IMR-90 (cell line): ENCODE measurements at regions of chr13 and their contacts with region 1.

Region 1: DNA sequence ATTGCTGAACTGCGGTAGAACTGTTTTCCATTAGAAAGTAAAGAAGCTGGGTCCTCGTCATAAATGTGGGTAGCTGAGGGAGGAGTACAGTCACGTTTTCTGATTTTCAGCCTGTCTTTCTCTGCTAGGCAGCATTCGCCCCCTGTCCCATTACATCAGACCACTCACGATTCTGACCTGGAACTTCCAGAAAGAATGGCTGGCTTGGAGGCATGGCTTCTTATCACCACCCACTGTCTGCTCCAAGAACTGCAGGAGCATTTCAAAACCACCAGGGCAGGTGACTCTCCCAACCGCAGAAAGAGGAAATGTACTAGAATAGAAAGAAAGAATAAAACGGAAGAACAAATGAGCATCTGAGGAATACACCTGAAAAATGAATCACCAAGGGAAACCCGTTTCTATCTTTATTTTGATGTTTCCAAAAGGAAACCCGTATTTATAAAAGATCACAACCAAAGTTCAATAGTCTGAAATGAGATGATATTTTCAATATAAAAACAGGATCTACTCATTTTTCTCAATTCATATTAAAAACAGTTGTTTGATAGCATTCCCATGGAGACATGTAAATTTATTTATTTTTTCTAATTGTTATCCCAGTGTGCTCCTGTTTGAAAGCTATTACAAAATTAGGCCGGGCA is 22.1 kb upstream of the POMP start:
- DNase-seq: peak; percentile 89
- ATAC-seq: peak; percentile 93
- H3K4me3 ChIP-seq: no peak overlapping the region
- H3K27ac ChIP-seq: no peak overlapping the region
- H3K4me1 ChIP-seq: peaks cover 2% of the 10 kb centered on the region; the same call in 1 of the 2 replicates
- H3K27me3 ChIP-seq: no peaks in the 10 kb centered on the region
- CTCF ChIP-seq: peak; percentile 93
- POLR2A ChIP-seq: peak; percentile 44; the same call in 1 of the 2 replicates
- RAD21 ChIP-seq: peak; percentile 98

Region 2: DNA sequence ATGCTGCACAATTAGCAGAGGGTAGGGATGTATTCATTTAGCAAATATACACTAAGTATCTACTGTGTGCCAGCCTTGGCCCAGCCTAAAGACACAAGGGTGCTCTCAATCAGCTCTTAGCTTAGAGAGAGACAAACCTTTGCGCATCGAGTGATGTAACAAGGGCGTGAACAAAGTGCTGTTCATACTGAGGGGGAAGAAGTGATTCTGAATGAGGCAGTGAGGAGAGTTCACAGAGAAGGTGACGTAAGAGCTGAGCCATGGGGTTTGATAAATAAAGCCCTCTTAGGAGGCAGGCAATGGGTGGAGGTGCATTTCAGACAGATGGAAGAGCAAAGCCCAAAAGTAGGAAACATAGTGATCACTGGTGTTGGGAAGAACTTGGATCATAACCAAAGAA is 210.4 kb before region 1 on chr13:
- CTCF ChIA-PET with region 1: no interaction called
- POLR2A ChIA-PET with region 1: no interaction called
- dilution Hi-C with region 1: no loop called
- in situ Hi-C with region 1: no loop called
- intact Hi-C with region 1: no loop called
- DNase-seq: no peak
- ATAC-seq: no peak
- H3K4me3 ChIP-seq: no peak overlapping the region
- H3K27ac ChIP-seq: no peak overlapping the region
- H3K4me1 ChIP-seq: peaks cover 3% of the 10 kb centered on the region
- H3K27me3 ChIP-seq: no peaks in the 10 kb centered on the region
- CTCF ChIP-seq: no peak
- POLR2A ChIP-seq: no peak
- RAD21 ChIP-seq: no peak

Region 3: GRCh38 chr13:28475916-28476725 is 160.7 kb before region 1 on chr13:
- CTCF ChIA-PET with region 1: no interaction called
- POLR2A ChIA-PET with region 1: no interaction called
- dilution Hi-C with region 1: no loop called
- in situ Hi-C with region 1: no loop called
- intact Hi-C with region 1: loop called (anchors 5 kb)
- DNase-seq: peak; percentile 97
- ATAC-seq: peak; percentile 63
- H3K4me3 ChIP-seq: no peak overlapping the region
- H3K27ac ChIP-seq: peak overlapping the region; percentile 63
- H3K4me1 ChIP-seq: peaks cover 14% of the 10 kb centered on the region
- H3K27me3 ChIP-seq: no peaks in the 10 kb centered on the region
- CTCF ChIP-seq: no peak
- POLR2A ChIP-seq: no peak
- RAD21 ChIP-seq: no peak

Region 4: DNA sequence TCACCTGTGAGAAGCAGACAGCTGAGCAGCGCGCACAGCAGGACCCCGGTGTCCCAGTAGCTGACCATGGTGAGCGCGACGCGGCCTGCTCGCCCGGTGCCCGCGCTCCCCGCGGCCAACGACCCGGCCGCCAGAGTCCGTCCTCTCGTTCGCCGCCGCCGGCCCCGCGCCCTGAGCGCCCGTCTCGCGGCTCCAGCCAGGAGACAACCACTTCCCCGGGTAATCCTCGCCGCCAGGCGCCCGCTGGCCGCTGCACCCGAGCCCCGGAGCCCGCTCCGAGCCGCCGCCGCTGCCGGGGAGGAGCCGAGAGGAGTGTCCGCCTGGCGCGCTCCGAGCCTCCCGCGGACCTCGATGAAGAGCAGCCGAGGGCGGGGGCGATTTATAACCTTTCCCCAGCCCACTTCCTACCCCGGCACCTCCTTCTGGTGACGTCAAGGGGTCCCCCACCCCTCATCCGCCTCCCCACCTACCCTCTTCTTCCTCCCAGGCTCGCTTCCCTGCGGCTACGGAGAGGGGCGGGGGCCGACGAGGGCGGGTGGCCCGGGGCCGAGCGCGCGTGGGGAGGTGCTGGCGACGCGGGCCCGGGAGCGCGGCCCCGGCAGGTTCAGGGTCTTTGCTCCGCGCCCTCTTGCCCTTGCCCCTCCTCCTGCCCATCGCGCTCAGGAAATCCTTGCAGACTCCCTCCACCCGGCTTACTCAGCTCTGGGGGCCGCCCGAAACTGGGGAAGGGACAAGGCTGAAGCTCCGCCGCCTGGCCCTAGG is 141.8 kb before region 1 on chr13 and contains the start of gene FLT1:
- CTCF ChIA-PET with region 1: interaction called, 5 read pairs
- POLR2A ChIA-PET with region 1: interaction called, 3 read pairs
- dilution Hi-C with region 1: no loop called
- in situ Hi-C with region 1: no loop called
- intact Hi-C with region 1: loop called (anchors 5 kb)
- DNase-seq: peak; percentile 38
- ATAC-seq: peak; percentile 68
- H3K4me3 ChIP-seq: peak within 1 kb of the TSS; percentile 94
- H3K27ac ChIP-seq: no peak within 1 kb of the TSS; the same call in 1 of the 2 replicates
- H3K4me1 ChIP-seq: peaks cover 4% of the 10 kb centered on the region; the same call in 1 of the 2 replicates
- H3K27me3 ChIP-seq: peaks cover 22% of the 10 kb centered on the region; the same call in 1 of the 2 replicates
- CTCF ChIP-seq: no peak
- POLR2A ChIP-seq: peak; percentile 64; the same call in 1 of the 2 replicates
- RAD21 ChIP-seq: no peak; the same call in 1 of the 2 replicates
- total RNA-seq, gene FLT1: 10.0 and 10.4 TPM in 2 replicates

Region 5: DNA sequence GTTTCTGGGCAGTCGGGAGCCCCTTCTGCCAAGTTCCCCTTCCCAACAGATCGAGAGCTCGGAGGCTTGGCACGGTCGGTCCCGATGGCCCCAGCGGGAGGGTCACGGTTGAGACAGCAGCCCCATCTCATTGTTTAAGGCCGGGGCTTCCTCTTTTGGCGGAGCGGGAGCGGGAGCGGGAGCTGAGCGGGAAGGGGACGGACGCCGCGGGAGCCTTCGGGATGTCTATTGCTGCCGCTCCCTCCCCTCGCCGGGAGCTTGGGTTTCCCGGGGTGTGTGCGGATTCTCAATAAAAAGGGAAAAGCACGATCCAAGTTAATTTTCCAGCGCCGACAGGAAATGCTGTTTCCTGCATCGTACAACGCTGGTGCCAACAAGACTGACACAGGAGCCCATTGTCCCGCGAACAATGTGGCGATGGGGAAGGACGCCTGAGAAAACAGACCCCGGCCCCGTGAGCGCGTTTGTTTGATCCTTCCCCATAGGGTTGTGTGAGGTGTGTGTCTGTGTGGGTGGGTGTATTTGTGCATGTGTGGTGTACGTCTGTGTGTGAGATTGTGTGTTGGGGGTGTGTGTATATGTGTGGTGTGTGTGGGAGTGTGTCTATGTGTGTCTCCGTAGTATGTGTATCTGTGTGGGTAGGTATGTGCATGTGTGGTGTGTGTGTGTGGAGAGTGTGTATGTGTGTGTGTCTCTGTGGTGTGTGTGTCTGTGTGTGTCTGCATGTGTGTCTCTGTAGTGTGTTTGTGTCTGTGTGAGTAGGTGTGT is 105.5 kb before region 1 on chr13:
- CTCF ChIA-PET with region 1: no interaction called
- POLR2A ChIA-PET with region 1: no interaction called
- dilution Hi-C with region 1: no loop called
- in situ Hi-C with region 1: no loop called
- intact Hi-C with region 1: loop called (anchors 5 kb)
- DNase-seq: peak; percentile 30
- ATAC-seq: peak; percentile 27
- H3K4me3 ChIP-seq: peak overlapping the region; percentile 37
- H3K27ac ChIP-seq: no peak overlapping the region
- H3K4me1 ChIP-seq: peaks cover 11% of the 10 kb centered on the region
- H3K27me3 ChIP-seq: peaks cover 3% of the 10 kb centered on the region; the same call in 1 of the 2 replicates
- CTCF ChIP-seq: no peak
- POLR2A ChIP-seq: no peak
- RAD21 ChIP-seq: no peak

Region 6: GRCh38 chr13:28819735-28820098 is 182.9 kb after region 1 on chr13:
- CTCF ChIA-PET with region 1: no interaction called
- POLR2A ChIA-PET with region 1: no interaction called
- dilution Hi-C with region 1: no loop called
- in situ Hi-C with region 1: no loop called
- intact Hi-C with region 1: no loop called
- DNase-seq: peak; percentile 32
- ATAC-seq: peak; percentile 96
- H3K4me3 ChIP-seq: peak overlapping the region; percentile 47
- H3K27ac ChIP-seq: no peak overlapping the region
- H3K4me1 ChIP-seq: peaks cover 6% of the 10 kb centered on the region
- H3K27me3 ChIP-seq: peaks cover 39% of the 10 kb centered on the region
- CTCF ChIP-seq: peak; percentile 44
- POLR2A ChIP-seq: no peak
- RAD21 ChIP-seq: 0 out of 2 replicates have a peak, but pooled peaks have one; percentile 20

Region 7: GRCh38 chr13:28830580-28830979 is 193.8 kb after region 1 on chr13:
- CTCF ChIA-PET with region 1: no interaction called
- POLR2A ChIA-PET with region 1: no interaction called
- dilution Hi-C with region 1: no loop called
- in situ Hi-C with region 1: no loop called
- intact Hi-C with region 1: no loop called
- DNase-seq: no peak
- ATAC-seq: no peak
- H3K4me3 ChIP-seq: no peak overlapping the region
- H3K27ac ChIP-seq: no peak overlapping the region
- H3K4me1 ChIP-seq: no peaks in the 10 kb centered on the region
- H3K27me3 ChIP-seq: no peaks in the 10 kb centered on the region
- CTCF ChIP-seq: no peak
- POLR2A ChIP-seq: no peak
- RAD21 ChIP-seq: no peak

Region 8: DNA sequence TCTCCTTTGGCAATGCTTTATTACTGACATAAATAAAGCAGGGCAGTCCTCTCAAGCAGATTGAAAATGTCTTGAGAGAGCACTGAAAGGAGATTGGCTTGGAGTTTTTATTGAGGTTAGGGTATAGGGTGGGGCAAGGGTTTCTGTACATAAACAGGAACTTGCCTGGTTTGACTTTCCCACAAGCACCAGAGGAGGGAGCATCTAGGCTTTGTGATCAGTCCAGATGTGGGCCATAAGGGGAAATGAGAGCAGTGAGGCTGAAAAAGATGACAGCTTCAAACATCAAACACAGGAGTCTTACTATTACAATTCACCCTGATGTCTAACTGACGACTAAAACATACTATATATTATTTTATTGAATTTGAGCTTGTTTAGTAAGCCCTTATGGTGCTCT is 444.2 kb after region 1 on chr13:
- CTCF ChIA-PET with region 1: no interaction called
- POLR2A ChIA-PET with region 1: no interaction called
- dilution Hi-C with region 1: no loop called
- in situ Hi-C with region 1: no loop called
- intact Hi-C with region 1: no loop called
- DNase-seq: no peak
- ATAC-seq: no peak
- H3K4me3 ChIP-seq: no peak overlapping the region
- H3K27ac ChIP-seq: no peak overlapping the region
- H3K4me1 ChIP-seq: no peaks in the 10 kb centered on the region
- H3K27me3 ChIP-seq: no peaks in the 10 kb centered on the region
- CTCF ChIP-seq: no peak
- POLR2A ChIP-seq: no peak
- RAD21 ChIP-seq: no peak